GM12878 (cell line): ENCODE measurements at regions of chr2 and their contacts with region 1.

Region 1: GRCh38 chr2:636641-637405 is 40.4 kb downstream of the TMEM18 start:
- DNase-seq: no peak
- ATAC-seq: peak; percentile 76
- H3K4me3 ChIP-seq: no peak overlapping the region
- H3K27ac ChIP-seq: no peak overlapping the region
- H3K4me1 ChIP-seq: no peaks in the 10 kb centered on the region
- H3K27me3 ChIP-seq: no peaks in the 10 kb centered on the region; a peak in 1 of 4 replicates
- CTCF ChIP-seq: peak; percentile 73 to 83 (median 83)
- EP300 ChIP-seq: no peak
- POLR2A ChIP-seq: no peak
- RAD21 ChIP-seq: peak; percentile 73

Region 2: DNA sequence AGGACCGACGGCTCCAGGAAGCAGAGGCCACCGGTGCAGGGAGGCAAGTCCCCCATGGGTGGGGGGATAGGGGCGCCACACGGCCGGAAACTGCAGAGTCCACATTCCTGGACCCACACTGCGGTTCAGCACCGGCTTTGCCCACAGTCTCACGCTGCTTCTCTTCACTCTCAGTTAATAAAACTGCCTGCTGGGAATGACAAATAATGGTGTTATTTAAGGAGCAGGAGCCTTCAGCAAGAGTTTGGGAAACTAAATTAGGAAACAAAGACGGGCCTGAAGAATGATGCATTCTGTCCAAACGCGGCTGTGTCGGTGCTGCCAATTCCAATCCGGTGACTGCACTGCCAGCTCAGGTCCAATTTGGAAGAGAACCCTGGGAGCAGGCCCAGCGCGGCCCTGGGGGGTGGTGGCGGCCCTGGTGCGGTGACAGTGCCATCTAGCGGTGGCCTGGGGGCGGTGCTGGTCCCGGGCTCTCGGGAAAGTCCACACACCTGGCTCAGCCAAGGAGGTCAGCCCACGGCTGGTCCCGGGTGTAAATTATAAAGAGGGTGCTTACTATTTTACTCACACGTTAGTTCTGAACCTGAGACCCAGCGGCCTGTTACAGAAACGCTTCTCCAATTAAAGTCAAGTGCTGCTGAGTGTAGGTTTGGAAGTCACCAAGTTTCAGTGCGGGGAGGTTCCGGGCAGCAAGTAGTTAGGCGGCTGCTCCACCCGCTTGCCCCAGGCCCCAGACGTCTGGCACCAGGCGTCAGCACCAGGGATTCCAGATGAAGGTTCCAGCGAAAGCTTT is 1180.6 kb after region 1 on chr2:
- CTCF ChIA-PET with region 1: no interaction called
- POLR2A ChIA-PET with region 1: no interaction called
- RAD21 ChIA-PET with region 1: no interaction called
- SMC1A ChIA-PET with region 1: no interaction called
- in situ Hi-C with region 1: no loop called
- intact Hi-C with region 1: loop called (anchors 5 kb)
- DNase-seq: no peak
- ATAC-seq: peak; percentile 100
- H3K4me3 ChIP-seq: no peak overlapping the region
- H3K27ac ChIP-seq: no peak overlapping the region
- H3K4me1 ChIP-seq: no peaks in the 10 kb centered on the region
- H3K27me3 ChIP-seq: no peaks in the 10 kb centered on the region
- CTCF ChIP-seq: peak; percentile 72 to 92 (median 89)
- EP300 ChIP-seq: no peak
- POLR2A ChIP-seq: no peak
- RAD21 ChIP-seq: peak; percentile 46